K562 (cell line): ENCODE measurements at regions of chr5 and their contacts with region 1.

Region 1: GRCh38 chr5:67077296-67077695 is 119.3 kb downstream of the CD180 start:
- DNase-seq: no peak
- ATAC-seq: no peak
- H3K4me3 ChIP-seq: no peak overlapping the region
- H3K27ac ChIP-seq: no peak overlapping the region
- H3K4me1 ChIP-seq: no peaks in the 10 kb centered on the region
- H3K27me3 ChIP-seq: no peaks in the 10 kb centered on the region
- CTCF ChIP-seq: no peak
- EP300 ChIP-seq: no peak
- POLR2A ChIP-seq: no peak
- RAD21 ChIP-seq: no peak

Region 2: DNA sequence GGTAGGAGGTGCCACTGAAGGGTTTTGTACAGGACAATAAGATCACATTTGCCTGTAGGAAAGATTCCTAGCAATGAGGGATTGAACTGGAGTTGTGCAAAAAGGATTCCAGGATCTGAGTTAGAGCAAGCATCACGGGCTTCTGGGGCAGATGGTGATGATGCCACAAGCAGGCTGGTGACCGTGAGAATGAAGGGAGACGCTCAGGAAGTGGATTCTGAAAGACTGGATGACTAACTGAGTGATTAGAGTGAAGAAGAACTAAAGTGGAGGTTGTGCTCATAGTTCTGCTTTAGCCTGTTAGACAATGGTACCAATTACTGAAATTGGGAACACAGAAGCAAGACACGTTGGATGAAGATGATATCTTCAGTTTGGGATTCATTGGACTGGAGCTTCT is 48.9 kb before region 1 on chr5:
- CTCF ChIA-PET with region 1: no interaction called
- POLR2A ChIA-PET with region 1: no interaction called
- in situ Hi-C with region 1: loop called (anchors 5 kb)
- intact Hi-C with region 1: no loop called
- DNase-seq: no peak
- ATAC-seq: no peak
- H3K4me3 ChIP-seq: no peak overlapping the region
- H3K27ac ChIP-seq: no peak overlapping the region
- H3K4me1 ChIP-seq: peaks cover 0 to 2% of the 10 kb centered on the region in 2 experiments; a peak in 3 of 5 replicates
- H3K27me3 ChIP-seq: no peaks in the 10 kb centered on the region
- CTCF ChIP-seq: no peak
- EP300 ChIP-seq: no peak
- POLR2A ChIP-seq: no peak
- RAD21 ChIP-seq: no peak